ENCODE measurements at regions of chr2 and their contacts with region 1.

Region 1: DNA sequence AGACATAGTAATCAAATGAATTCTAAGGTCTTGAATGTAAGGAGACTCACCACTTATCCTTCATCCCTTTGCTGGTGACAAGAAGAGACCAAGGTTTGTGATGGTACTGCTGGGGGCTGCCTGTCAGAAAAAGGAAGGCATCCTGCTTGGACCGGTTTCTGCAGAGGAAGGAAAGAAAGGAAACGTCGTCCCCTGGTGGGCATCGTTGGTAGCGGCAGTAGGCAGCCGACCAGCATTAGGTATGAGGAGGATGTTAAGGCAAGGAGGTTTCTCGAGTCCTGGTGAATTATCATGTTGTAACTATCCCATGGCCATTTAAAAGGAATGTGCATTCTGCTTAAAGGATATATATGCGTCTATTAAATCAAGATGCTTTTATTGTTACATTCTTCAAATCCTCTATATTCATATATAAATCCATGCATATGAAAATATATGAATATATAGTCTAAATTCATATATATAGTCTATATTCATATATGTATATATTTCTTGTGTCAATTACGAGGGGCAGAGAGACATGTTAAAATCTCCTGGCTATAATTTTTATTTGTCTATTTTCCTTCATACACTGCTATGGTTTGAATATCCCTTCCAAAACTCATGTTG is 94.4 kb upstream of the TGFA start:
- DNase-seq: peak in 1 of 2 donors; percentile 30
- H3K4me3 ChIP-seq: no peak overlapping the region
- CTCF ChIP-seq: peak in 2 of 3 donors; percentile 38 to 77
- POLR2A ChIP-seq: no peak

Region 2: DNA sequence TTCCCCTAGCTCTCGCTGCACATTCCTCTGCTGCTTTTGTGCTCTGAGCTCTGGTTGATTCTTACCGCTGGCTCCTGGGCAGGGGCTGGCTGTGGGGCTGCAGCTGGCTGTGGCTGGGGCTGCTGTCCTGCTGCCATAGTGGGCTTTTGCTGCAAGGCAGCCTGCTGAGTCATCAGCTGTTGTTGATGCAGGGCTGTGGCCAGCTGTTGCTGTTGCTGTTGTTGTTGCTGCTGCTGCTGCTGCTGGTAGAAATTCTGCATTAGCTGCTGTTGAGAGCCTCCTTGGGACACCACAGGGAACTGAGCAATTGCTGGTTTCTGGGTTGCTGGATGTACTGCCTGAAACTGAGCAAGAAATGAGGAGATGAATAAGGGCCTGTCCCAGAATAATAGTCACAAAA is 1133.6 kb before region 1 on chr2:
- intact Hi-C with region 1: no loop called
- DNase-seq: no peak
- H3K4me3 ChIP-seq: no peak overlapping the region
- CTCF ChIP-seq: no peak
- POLR2A ChIP-seq: no peak

Region 3: GRCh38 chr2:70301344-70302194 is 346.4 kb before region 1 on chr2 and contains the start of gene FAM136A:
- intact Hi-C with region 1: loop called (anchors 10 kb)
- DNase-seq: peak; percentile 73 to 96
- H3K4me3 ChIP-seq: peak within 1 kb of the TSS; percentile 94
- CTCF ChIP-seq: peak in 1 of 3 donors; percentile 33
- POLR2A ChIP-seq: no peak
- total RNA-seq, gene FAM136A: 20.1 to 22.4 (median 21.3) TPM

Region 4: DNA sequence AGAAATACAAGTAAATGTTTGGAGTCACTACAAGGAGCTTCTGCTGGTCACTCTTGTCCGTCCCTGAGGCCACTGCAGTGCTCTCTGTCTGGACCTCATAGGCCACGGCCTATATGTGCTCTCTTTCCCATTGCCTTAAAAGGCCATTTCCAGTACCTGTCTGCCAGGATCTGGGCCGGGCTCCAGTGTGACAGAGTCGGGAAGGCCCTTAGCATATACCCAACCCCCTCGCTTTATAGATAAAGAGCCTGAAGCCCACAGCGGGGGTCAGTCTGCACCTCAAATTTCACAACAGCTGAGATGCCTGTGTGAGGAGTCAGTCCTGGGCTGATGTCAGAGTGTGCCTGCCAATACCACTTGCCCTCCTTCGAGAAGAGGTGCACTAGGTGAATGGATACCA is 80.2 kb after region 1 on chr2:
- intact Hi-C with region 1: no loop called
- DNase-seq: no peak
- H3K4me3 ChIP-seq: no peak overlapping the region
- CTCF ChIP-seq: no peak
- POLR2A ChIP-seq: no peak